Caco-2 (cell line): ENCODE measurements at regions of chr9 and their contacts with region 1.

Region 1: GRCh38 chr9:5186416-5187169 is 1.2 kb upstream of the INSL6 start:
- DNase-seq: peak; percentile 43 to 50
- H3K4me3 ChIP-seq: no peak overlapping the region
- H3K4me3 Mint-ChIP-seq: no peak overlapping the region
- H3K27ac Mint-ChIP-seq: no peak overlapping the region
- H3K4me1 ChIP-seq: no peaks in the 10 kb centered on the region
- H3K4me1 Mint-ChIP-seq: no peaks in the 10 kb centered on the region
- H3K27me3 ChIP-seq: no peaks in the 10 kb centered on the region
- H3K27me3 Mint-ChIP-seq: peaks cover 11% of the 10 kb centered on the region
- CTCF ChIP-seq: peak; percentile 37 to 74

Region 2: DNA sequence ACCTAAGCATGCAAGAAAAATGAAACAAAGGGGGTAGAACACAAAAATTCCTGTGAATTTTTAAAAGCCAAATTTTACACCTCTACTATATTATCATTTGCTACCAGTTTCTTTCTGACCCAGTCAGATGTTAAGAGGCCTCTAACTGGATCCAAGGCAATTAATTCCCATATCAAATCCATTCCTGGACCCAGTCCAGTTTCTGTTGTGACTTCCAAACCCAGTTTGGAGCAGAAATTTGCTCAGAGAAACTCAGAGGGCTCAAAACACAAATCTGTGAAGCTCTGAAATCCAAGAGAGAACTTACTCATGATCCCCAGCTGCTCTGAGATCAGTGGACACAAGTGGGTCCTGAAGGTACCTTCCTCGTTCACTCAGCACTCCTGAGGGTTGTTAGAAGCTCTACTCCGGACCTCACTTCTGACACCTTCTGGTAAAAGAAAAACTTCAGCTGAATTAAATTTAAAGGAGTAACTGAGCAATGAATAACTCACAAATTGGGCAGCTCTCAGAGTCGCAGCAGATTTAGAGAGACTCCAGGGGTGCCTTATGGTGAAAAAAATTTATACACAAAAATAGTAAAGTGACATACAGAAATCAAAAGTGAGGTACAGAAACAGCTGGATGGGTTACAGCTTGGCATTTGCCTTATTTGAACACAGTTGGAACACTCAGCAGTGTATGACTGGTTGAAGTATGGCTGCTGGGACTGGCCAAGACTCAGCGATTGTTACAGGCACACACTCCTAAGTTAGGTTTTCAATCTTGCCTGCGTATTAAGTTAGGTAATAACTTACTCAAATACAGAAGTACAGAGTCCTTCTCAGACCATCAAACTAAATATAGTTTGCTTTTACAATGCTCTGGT is 77.0 kb after region 1 on chr9:
- CTCF ChIA-PET with region 1: interaction called, 3 read pairs
- POLR2A ChIA-PET with region 1: no interaction called
- intact Hi-C with region 1: loop called (anchors 1 kb)
- DNase-seq: peak in 1 of 2 experiments; percentile 11
- H3K4me3 ChIP-seq: no peak overlapping the region
- H3K4me3 Mint-ChIP-seq: no peak overlapping the region
- H3K27ac Mint-ChIP-seq: no peak overlapping the region
- H3K4me1 ChIP-seq: peaks cover 5% of the 10 kb centered on the region; the same call in 1 of the 2 replicates
- H3K4me1 Mint-ChIP-seq: no peaks in the 10 kb centered on the region
- H3K27me3 ChIP-seq: no peaks in the 10 kb centered on the region
- H3K27me3 Mint-ChIP-seq: no peaks in the 10 kb centered on the region
- CTCF ChIP-seq: no peak

Region 3: GRCh38 chr9:5321058-5321457 is 134.5 kb after region 1 on chr9:
- CTCF ChIA-PET with region 1: interaction called, 11 read pairs
- POLR2A ChIA-PET with region 1: no interaction called
- intact Hi-C with region 1: loop called (anchors 1 kb)
- DNase-seq: no peak
- H3K4me3 ChIP-seq: no peak overlapping the region
- H3K4me3 Mint-ChIP-seq: no peak overlapping the region
- H3K27ac Mint-ChIP-seq: no peak overlapping the region
- H3K4me1 ChIP-seq: no peaks in the 10 kb centered on the region
- H3K4me1 Mint-ChIP-seq: no peaks in the 10 kb centered on the region
- H3K27me3 ChIP-seq: no peaks in the 10 kb centered on the region
- H3K27me3 Mint-ChIP-seq: peaks cover 4% of the 10 kb centered on the region
- CTCF ChIP-seq: no peak

Region 4: GRCh38 chr9:5425006-5425628 is 238.5 kb after region 1 on chr9:
- CTCF ChIA-PET with region 1: interaction called, 5 read pairs
- POLR2A ChIA-PET with region 1: no interaction called
- intact Hi-C with region 1: loop called (anchors 1 kb)
- DNase-seq: peak in 1 of 2 experiments; percentile 20
- H3K4me3 ChIP-seq: no peak overlapping the region
- H3K4me3 Mint-ChIP-seq: no peak overlapping the region
- H3K27ac Mint-ChIP-seq: no peak overlapping the region
- H3K4me1 ChIP-seq: no peaks in the 10 kb centered on the region
- H3K4me1 Mint-ChIP-seq: no peaks in the 10 kb centered on the region
- H3K27me3 ChIP-seq: no peaks in the 10 kb centered on the region
- H3K27me3 Mint-ChIP-seq: no peaks in the 10 kb centered on the region
- CTCF ChIP-seq: no peak

Region 5: DNA sequence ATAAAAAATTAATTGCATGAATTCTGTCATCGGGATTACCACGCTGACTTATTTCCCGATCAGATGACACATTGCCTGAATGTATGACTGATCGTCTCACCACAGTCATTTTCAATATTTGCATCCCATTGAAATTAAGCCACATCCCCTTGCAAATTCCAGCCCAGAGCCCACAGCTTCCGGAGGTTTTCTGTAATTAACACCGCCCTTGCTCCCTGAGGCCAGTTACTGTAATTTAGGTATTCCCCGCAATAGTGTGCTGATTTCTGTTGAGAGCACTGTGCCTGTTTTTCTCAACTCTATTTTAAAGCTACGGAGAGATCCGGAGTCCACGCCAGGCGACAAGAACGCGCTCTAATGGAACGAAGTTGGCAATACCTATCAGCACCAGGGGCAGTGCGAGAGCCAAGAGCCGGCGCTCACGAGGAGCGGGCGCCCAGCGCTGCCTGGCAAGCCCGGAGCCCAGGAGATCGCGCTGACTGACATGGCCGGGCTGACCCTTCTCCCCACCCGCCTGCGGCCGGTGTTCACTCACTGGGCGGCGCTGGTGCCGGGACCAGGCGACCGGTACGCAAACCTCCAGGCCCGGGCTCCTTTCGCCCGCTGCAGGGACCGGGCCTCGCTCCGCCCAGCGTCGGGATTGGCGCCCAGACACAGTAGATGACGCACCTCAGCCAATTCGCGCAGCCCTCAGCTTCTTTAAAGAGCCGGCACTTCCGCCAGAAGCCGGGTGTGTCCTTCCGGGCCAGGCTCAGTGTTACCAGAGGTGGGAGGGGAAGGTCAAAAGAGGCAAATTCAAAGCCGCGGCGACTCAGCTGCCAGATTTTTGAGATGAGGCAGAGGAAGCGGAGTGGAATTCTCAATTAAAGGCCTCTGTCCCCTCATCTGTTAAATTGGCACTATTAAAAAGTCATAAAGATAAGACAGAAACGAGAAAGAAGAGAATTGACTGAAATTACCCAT is 250.9 kb after region 1 on chr9 and contains the start of gene PLGRKT:
- CTCF ChIA-PET with region 1: interaction called, 25 read pairs
- POLR2A ChIA-PET with region 1: no interaction called
- intact Hi-C with region 1: loop called (anchors 1 kb)
- DNase-seq: peak; percentile 90 to 91
- H3K4me3 ChIP-seq: peak within 1 kb of the TSS; percentile 49
- H3K4me3 Mint-ChIP-seq: peak within 1 kb of the TSS; percentile 80
- H3K27ac Mint-ChIP-seq: peak within 1 kb of the TSS; percentile 80
- H3K4me1 ChIP-seq: peaks cover 8% of the 10 kb centered on the region; the same call in 1 of the 2 replicates
- H3K4me1 Mint-ChIP-seq: no peaks in the 10 kb centered on the region
- H3K27me3 ChIP-seq: no peaks in the 10 kb centered on the region
- H3K27me3 Mint-ChIP-seq: no peaks in the 10 kb centered on the region
- CTCF ChIP-seq: peak in 1 of 2 experiments; percentile 26
- total RNA-seq, gene PLGRKT: 5.0 and 7.0 TPM in 2 replicates

Region 6: DNA sequence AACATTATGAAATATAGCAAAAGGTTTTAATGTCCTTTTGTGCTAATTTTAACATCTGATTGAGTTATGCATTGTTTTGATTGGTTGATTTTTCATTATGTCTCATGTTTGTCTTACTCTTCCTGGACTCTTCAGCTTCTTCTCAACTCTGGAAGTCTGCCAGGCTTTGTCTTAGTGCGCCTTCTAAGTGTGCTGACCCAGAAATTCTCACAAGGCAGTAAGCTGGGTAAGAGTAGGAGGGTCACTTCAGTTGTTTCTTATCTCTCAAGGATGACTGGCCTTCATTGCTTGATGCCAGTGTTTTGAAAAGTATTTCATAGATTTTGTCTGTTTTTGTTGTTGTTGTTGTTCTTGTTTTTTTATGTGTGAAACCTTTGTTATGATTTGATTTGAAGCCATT is 501.5 kb after region 1 on chr9:
- CTCF ChIA-PET with region 1: no interaction called
- POLR2A ChIA-PET with region 1: no interaction called
- intact Hi-C with region 1: no loop called
- DNase-seq: no peak
- H3K4me3 ChIP-seq: no peak overlapping the region
- H3K4me3 Mint-ChIP-seq: no peak overlapping the region
- H3K27ac Mint-ChIP-seq: no peak overlapping the region
- H3K4me1 ChIP-seq: peaks cover 10% of the 10 kb centered on the region
- H3K4me1 Mint-ChIP-seq: no peaks in the 10 kb centered on the region
- H3K27me3 ChIP-seq: no peaks in the 10 kb centered on the region
- H3K27me3 Mint-ChIP-seq: no peaks in the 10 kb centered on the region
- CTCF ChIP-seq: no peak